Left colon (tissue), 2 donors: ENCODE measurements at regions of chr1 and their contacts with region 1.

Region 1: GRCh38 chr1:237386362-237387143 is 344.6 kb downstream of the RYR2 start:
- DNase-seq: no peak
- ATAC-seq: no peak

Region 2: DNA sequence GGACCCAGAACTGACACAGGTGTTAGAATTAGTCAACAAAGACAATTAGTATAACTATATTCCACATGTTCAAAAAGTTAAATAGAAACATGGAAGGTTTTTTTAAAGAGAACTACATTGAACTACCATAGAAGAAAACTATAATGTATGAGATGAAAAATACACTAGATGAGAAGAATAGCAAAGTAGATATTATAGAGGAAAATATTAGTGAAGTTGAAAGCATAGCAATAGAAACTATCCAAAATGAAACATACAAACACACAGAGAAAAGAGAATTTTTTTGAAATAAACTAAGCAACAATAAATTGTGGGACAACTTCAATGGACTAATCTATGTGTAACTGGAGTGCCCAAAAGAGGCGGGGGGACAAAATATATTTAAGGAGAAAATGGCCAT is 774.2 kb before region 1 on chr1:
- intact Hi-C with region 1: loop called in 1 of 2 experiments (anchors 5 kb)
- DNase-seq: no peak
- ATAC-seq: no peak

Region 3: GRCh38 chr1:237041795-237042525 is 344.6 kb before region 1 on chr1 and contains the start of gene RYR2:
- intact Hi-C with region 1: loop called in 1 of 2 experiments (anchors 10 kb)
- DNase-seq: no peak
- ATAC-seq: peak; percentile 40
- total RNA-seq, gene RYR2: 0.18 to 0.45 TPM

Region 4: DNA sequence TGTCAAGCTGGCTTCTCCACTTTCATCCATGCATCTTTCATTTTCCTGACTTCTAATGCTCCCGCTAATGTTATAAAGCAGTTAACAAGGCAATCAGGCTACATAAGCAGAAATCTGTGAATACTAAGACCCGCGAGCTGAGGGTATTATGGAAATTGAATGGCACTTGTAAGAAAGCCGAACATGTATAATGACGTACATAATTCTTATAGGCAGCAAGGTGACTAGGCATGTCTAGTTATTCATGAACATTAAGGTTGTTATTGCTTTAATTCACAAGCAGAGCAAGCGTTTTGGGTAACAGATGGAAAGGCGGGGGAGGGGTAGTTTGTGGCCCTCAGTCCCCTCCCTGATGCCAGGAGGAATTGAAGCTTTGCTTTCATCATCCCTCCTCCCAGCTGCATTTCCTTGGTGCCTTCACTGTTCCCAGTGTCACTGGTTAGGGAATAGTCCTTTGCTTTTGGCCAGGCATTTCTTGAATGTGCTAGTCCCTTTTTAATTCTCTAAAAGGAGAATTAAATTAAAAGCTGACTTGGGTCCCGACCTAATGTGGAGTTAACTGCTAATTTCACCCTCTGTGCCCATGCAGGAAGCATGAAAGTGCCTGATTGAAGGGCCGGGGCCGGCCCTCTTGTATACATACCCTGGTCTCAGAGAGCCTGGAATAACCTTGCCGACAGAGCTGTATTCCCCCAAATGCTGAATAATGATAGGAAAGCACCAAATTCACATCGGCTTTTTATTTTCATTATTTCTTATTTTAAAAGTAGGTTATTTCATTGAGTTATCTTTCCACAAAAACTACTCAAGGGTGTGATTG is 302.1 kb before region 1 on chr1:
- intact Hi-C with region 1: loop called in 1 of 2 experiments (anchors 10 kb)
- DNase-seq: no peak
- ATAC-seq: no peak

Region 5: GRCh38 chr1:237146241-237146640 is 240.3 kb before region 1 on chr1:
- intact Hi-C with region 1: no loop called
- DNase-seq: no peak
- ATAC-seq: no peak